Activated naive CD4-positive, alpha-beta T cell treated with anti-CD3 and anti-CD28 coated beads for 36 hours (primary cell): ENCODE measurements at regions of chr7 and their contacts with region 1.

Region 1: GRCh38 chr7:127629268-127629854 is 11.4 kb upstream of the PAX4 start:
- DNase-seq: peak; percentile 48
- H3K4me3 Mint-ChIP-seq: no peak overlapping the region
- H3K27ac Mint-ChIP-seq: no peak overlapping the region
- H3K4me1 Mint-ChIP-seq: peaks cover 2% of the 10 kb centered on the region
- H3K27me3 Mint-ChIP-seq: peaks cover 5% of the 10 kb centered on the region

Region 2: DNA sequence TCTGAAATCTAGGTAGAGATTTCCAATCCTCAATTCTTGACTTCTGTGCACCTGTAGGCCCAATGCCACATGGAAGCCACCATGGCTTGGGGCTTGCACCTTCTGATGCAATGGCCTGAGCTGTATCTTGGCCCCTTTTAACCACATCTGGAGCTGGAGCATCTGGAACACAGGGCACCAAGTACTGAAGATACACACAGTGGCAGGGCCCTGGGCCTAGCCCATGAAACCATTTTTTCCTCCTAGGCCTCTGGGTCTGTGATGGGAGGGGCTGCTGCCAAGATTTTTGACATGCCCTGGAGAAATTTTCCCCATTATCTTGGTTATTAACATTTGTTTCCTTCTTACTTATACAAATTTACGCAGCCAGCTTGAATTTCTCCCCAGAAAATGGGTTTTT is 83.0 kb before region 1 on chr7:
- CTCF ChIA-PET with region 1: no interaction called
- intact Hi-C with region 1: loop called (anchors 5 kb)
- DNase-seq: no peak
- H3K4me3 Mint-ChIP-seq: no peak overlapping the region
- H3K27ac Mint-ChIP-seq: no peak overlapping the region
- H3K4me1 Mint-ChIP-seq: no peaks in the 10 kb centered on the region
- H3K27me3 Mint-ChIP-seq: peaks cover 2% of the 10 kb centered on the region

Region 3: GRCh38 chr7:127582361-127582760 is 47.0 kb before region 1 on chr7:
- CTCF ChIA-PET with region 1: no interaction called
- intact Hi-C with region 1: no loop called
- DNase-seq: no peak
- H3K4me3 Mint-ChIP-seq: no peak overlapping the region
- H3K27ac Mint-ChIP-seq: no peak overlapping the region
- H3K4me1 Mint-ChIP-seq: peaks cover 57% of the 10 kb centered on the region
- H3K27me3 Mint-ChIP-seq: no peaks in the 10 kb centered on the region